ENCODE measurements at regions of chr1 and their contacts with region 1.

Region 1: GRCh38 chr1:45011837-45012638 is at the start of gene UROD:
- DNase-seq: peak; percentile 96
- H3K4me3 Mint-ChIP-seq: peak within 1 kb of the TSS; percentile 88
- H3K27ac Mint-ChIP-seq: peak within 1 kb of the TSS; percentile 85
- H3K4me1 Mint-ChIP-seq: peaks cover 20% of the 10 kb centered on the region
- H3K27me3 Mint-ChIP-seq: no peaks in the 10 kb centered on the region
- CTCF ChIP-seq: no peak
- total RNA-seq, gene UROD: 76.9 and 84.7 TPM in 2 replicates

Region 2: DNA sequence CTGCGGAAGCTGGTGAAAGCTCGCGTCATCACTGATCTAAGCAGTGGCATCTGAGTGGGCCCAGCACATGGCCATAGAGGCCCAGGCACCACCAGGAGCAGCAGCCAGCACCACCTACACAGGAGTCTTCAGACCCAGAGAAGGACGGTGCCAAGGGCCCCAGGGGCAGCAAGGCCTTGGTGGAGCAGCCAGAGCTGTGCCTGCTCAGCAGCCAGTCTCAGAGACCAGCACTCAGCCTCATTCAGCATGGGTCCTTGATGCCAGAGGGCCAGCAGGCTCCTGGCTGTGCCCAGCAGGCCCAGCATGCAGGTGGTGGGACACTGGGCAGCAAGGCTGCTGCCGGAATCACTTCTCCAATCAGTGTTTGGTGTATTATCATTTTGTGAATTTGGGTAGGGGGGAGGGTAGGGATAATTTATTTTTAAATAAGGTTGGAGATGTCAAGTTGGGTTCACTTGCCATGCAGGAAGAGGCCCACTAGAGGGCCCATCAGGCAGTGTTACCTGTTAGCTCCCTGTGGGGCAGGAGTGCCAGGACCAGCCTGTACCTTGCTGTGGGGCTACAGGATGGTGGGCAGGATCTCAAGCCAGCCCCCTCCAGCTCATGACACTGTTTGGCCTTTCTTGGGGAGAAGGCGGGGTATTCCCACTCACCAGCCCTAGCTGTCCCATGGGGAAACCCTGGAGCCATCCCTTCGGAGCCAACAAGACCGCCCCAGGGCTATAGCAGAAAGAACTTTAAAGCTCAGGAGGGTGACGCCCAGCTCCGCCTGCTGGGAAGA is 1081.7 kb before region 1 on chr1:
- CTCF ChIA-PET with region 1: no interaction called
- POLR2A ChIA-PET with region 1: no interaction called
- intact Hi-C with region 1: no loop called
- DNase-seq: peak; percentile 41
- H3K4me3 Mint-ChIP-seq: no peak overlapping the region
- H3K27ac Mint-ChIP-seq: no peak overlapping the region
- H3K4me1 Mint-ChIP-seq: peaks cover 27% of the 10 kb centered on the region
- H3K27me3 Mint-ChIP-seq: no peaks in the 10 kb centered on the region
- CTCF ChIP-seq: peak; percentile 29

Region 3: GRCh38 chr1:44721485-44722361 is 290.3 kb before region 1 on chr1:
- CTCF ChIA-PET with region 1: interaction called, 3 read pairs
- POLR2A ChIA-PET with region 1: interaction called, 17 read pairs
- intact Hi-C with region 1: no loop called
- DNase-seq: peak; percentile 98
- H3K4me3 Mint-ChIP-seq: peak overlapping the region; percentile 39
- H3K27ac Mint-ChIP-seq: peak overlapping the region; percentile 98
- H3K4me1 Mint-ChIP-seq: peaks cover 23% of the 10 kb centered on the region
- H3K27me3 Mint-ChIP-seq: no peaks in the 10 kb centered on the region
- CTCF ChIP-seq: no peak

Region 4: DNA sequence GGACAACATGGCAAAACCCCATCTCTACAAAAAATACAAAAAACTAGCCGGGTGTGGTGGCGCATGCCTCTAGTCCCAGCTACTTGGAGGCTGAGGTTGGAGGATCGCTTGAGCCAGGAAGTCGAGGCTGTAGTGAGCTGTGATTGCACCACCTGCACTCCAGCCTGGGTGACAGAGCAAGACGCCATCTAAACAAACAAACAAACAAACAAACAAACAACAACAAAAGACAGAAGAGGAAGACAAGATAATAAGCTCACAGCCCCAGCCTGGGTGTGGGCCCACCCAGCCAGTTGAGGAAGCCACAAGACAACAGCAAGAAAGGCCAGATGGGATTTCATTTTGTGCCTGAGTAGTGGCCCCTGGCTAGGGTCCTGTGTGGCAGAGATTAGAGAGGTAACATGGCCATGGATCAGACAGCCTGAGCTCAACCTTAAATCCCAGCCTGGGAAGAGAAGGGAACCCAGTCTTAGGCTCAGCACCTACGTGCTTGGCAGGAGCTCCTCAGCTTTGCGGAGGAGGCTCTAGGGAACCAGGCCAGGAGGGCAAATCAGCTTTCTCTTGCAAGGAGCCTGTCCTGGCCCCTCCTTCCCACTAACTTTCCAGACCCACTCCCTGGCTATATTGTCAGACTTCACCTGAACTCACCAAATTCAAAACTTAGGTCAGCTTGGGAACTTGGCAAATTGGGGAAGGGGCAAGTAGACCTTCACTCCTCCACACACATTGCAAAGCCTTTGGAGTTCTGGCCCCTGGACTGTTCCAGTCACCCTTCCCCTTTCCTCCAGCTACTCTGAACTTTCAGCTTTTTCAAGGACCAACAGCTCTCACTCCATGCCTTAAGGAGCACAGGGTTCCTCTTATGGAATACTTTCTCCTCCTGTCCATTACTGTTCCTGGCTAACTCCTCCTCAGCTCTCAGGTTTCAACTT is 219.0 kb before region 1 on chr1:
- CTCF ChIA-PET with region 1: interaction called, 4 read pairs
- POLR2A ChIA-PET with region 1: interaction called, 12 read pairs
- intact Hi-C with region 1: loop called (anchors 2 kb)
- DNase-seq: no peak
- H3K4me3 Mint-ChIP-seq: no peak overlapping the region
- H3K27ac Mint-ChIP-seq: peak overlapping the region; percentile 85
- H3K4me1 Mint-ChIP-seq: peaks cover 7% of the 10 kb centered on the region
- H3K27me3 Mint-ChIP-seq: no peaks in the 10 kb centered on the region
- CTCF ChIP-seq: no peak

Region 5: DNA sequence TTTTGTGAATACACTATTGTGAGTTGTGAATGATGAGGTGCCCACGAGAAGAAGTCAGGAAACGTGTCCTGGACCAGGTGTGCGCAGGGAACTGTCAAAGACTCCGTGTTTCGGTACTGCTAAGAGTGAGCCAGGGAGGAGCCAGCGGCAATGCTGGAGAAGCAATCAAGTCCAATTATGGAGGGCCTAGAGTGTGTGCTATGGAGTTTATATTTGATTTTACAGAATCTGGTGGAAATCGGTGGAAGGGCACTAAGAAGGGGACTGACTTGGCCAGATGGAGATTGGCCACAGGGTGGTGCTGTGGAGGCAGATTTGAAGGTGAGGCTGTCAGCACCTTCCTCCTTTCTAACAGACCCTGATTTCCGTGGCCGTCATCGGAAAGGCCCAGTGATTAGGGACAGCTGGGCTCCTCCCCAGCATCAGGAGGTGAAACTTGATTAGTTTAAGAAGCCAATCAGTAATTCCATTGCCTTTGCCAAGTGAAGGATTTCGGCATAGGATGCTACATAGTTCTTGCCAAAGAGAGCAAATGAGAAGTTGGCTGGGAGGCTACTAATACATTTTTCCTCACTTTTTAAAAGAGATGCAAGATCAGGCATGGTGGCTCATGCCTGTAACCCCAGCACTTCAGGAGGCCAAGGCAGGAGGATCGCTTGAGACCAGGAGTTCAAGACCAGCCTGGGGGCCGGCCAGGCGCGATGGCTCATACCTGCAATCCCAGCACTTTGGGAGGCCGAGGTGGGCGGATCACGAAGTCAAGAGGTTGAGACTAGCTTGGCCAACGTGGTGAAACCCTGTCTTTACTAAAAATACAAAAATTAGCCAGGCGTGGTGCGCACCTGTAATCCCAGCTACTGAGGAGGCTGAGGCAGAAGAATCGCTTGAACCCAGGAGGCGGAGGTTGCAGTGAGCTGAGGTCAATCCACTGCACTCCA is 176.0 kb before region 1 on chr1:
- CTCF ChIA-PET with region 1: interaction called, 14 read pairs
- POLR2A ChIA-PET with region 1: interaction called, 7 read pairs
- intact Hi-C with region 1: loop called (anchors 1 kb)
- DNase-seq: peak; percentile 78
- H3K4me3 Mint-ChIP-seq: no peak overlapping the region
- H3K27ac Mint-ChIP-seq: peak overlapping the region; percentile 13
- H3K4me1 Mint-ChIP-seq: no peaks in the 10 kb centered on the region
- H3K27me3 Mint-ChIP-seq: no peaks in the 10 kb centered on the region
- CTCF ChIP-seq: peak; percentile 81

Region 6: DNA sequence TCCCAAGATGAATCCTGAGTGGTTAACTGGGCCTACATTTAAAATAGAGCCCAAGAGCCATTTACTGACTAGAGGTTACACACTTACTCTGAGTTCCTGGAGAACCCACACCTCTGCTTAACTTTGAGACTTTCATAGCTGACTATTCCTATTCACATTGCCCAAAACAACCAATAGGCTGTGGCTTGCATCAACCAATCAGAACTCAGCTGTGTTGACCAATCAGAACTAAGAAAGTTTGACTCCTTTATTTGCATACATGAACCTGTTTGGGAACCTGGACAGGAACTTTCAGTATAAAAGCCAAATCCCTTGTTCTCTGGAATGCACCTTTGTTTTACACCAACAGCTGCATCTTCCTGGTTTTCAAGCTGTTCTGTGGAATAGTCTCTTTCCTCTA is 184.8 kb after region 1 on chr1:
- CTCF ChIA-PET with region 1: no interaction called
- POLR2A ChIA-PET with region 1: no interaction called
- intact Hi-C with region 1: no loop called
- DNase-seq: no peak
- H3K4me3 Mint-ChIP-seq: no peak overlapping the region
- H3K27ac Mint-ChIP-seq: no peak overlapping the region
- H3K4me1 Mint-ChIP-seq: no peaks in the 10 kb centered on the region
- H3K27me3 Mint-ChIP-seq: peaks cover 10% of the 10 kb centered on the region
- CTCF ChIP-seq: no peak

Region 7: DNA sequence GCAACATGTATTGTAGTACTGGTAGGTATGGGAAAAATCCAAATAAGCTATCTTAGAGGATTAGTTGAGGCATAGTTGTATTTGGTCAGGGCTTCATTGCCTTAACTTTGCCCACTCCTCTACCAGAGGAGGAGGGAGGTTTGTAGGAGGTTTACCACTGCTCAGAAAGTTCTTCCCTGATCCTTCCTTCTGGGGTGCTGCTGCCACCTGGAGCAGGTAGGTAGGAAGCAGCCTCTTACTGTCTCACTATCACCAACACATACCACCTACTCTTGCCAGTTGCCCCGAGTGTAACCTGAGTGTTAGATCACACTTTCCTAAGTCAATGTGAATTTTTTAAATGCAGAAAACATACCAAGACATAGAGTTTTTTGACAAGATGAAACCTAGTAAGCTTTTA is 218.5 kb after region 1 on chr1:
- CTCF ChIA-PET with region 1: interaction called, 26 read pairs
- POLR2A ChIA-PET with region 1: interaction called, 3 read pairs
- intact Hi-C with region 1: no loop called
- DNase-seq: peak; percentile 50
- H3K4me3 Mint-ChIP-seq: no peak overlapping the region
- H3K27ac Mint-ChIP-seq: no peak overlapping the region
- H3K4me1 Mint-ChIP-seq: no peaks in the 10 kb centered on the region
- H3K27me3 Mint-ChIP-seq: no peaks in the 10 kb centered on the region
- CTCF ChIP-seq: no peak

Region 8: GRCh38 chr1:45348716-45349677 is 337.0 kb after region 1 on chr1:
- CTCF ChIA-PET with region 1: interaction called, 7 read pairs
- POLR2A ChIA-PET with region 1: interaction called, 19 read pairs
- intact Hi-C with region 1: no loop called
- DNase-seq: peak; percentile 83
- H3K4me3 Mint-ChIP-seq: peak overlapping the region; percentile 28
- H3K27ac Mint-ChIP-seq: peak overlapping the region; percentile 52
- H3K4me1 Mint-ChIP-seq: peaks cover 21% of the 10 kb centered on the region
- H3K27me3 Mint-ChIP-seq: no peaks in the 10 kb centered on the region
- CTCF ChIP-seq: no peak

Region 9: GRCh38 chr1:45499415-45499769 is 487.4 kb after region 1 on chr1:
- CTCF ChIA-PET with region 1: interaction called, 55 read pairs
- POLR2A ChIA-PET with region 1: interaction called, 20 read pairs
- intact Hi-C with region 1: no loop called
- DNase-seq: no peak
- H3K4me3 Mint-ChIP-seq: peak overlapping the region; percentile 97
- H3K27ac Mint-ChIP-seq: peak overlapping the region; percentile 94
- H3K4me1 Mint-ChIP-seq: peaks cover 26% of the 10 kb centered on the region
- H3K27me3 Mint-ChIP-seq: no peaks in the 10 kb centered on the region
- CTCF ChIP-seq: no peak

Measured in MCF 10A (cell line).